ENCODE measurements at regions of chr9 and their contacts with region 1.

Region 1: DNA sequence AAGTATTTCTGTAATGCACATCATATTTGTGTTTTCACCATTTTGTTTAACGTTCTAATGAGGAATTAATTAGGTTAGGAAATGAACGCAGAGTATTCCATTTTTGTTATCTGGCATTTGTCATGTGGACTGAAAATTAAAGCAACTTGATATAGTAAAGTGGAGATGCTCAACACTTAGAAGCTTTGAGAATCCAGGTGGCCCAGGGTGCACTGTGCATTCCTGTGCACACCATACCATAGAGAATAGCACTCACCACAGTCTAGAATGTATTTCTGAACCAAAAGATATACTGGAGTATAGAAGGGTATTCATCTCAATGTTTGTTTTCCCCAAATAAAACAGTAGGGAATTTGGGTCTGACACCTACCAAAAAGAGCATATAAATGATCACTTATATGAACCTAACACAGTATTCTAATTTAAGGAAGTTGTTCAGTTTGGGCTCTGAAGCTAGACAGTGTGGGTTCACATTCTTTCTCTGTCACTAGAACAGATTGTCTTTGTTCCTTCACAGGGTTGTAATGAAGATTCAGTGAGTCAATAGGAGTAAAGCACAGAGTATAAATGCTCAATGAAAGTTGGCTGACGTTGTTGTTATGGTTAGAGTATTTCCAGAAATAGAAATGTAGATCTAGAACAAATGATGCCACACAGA is 125.6 kb upstream of the DMRT1 start:
- DNase-seq: no peak
- H3K4me3 ChIP-seq: no peak overlapping the region
- H3K4me3 Mint-ChIP-seq: no peak overlapping the region
- H3K27ac Mint-ChIP-seq: no peak overlapping the region
- H3K4me1 ChIP-seq: no peaks in the 10 kb centered on the region
- H3K4me1 Mint-ChIP-seq: no peaks in the 10 kb centered on the region
- H3K27me3 ChIP-seq: no peaks in the 10 kb centered on the region
- H3K27me3 Mint-ChIP-seq: no peaks in the 10 kb centered on the region
- CTCF ChIP-seq: no peak

Region 2: GRCh38 chr9:469672-470551 is 246.0 kb before region 1 on chr9:
- CTCF ChIA-PET with region 1: no interaction called
- POLR2A ChIA-PET with region 1: no interaction called
- intact Hi-C with region 1: no loop called
- DNase-seq: peak; percentile 85
- H3K4me3 ChIP-seq: peak overlapping the region; percentile 61
- H3K4me3 Mint-ChIP-seq: peak overlapping the region; percentile 94
- H3K27ac Mint-ChIP-seq: peak overlapping the region; percentile 95
- H3K4me1 ChIP-seq: peaks cover 28% of the 10 kb centered on the region
- H3K4me1 Mint-ChIP-seq: peaks cover 13% of the 10 kb centered on the region
- H3K27me3 ChIP-seq: no peaks in the 10 kb centered on the region
- H3K27me3 Mint-ChIP-seq: no peaks in the 10 kb centered on the region
- CTCF ChIP-seq: no peak

Region 3: GRCh38 chr9:607417-607816 is 108.5 kb before region 1 on chr9:
- CTCF ChIA-PET with region 1: no interaction called
- POLR2A ChIA-PET with region 1: interaction called, 12 read pairs
- intact Hi-C with region 1: no loop called
- DNase-seq: no peak
- H3K4me3 ChIP-seq: no peak overlapping the region
- H3K4me3 Mint-ChIP-seq: no peak overlapping the region
- H3K27ac Mint-ChIP-seq: no peak overlapping the region
- H3K4me1 ChIP-seq: peaks cover 24% of the 10 kb centered on the region
- H3K4me1 Mint-ChIP-seq: peaks cover 1% of the 10 kb centered on the region
- H3K27me3 ChIP-seq: no peaks in the 10 kb centered on the region
- H3K27me3 Mint-ChIP-seq: no peaks in the 10 kb centered on the region
- CTCF ChIP-seq: no peak

Region 4: GRCh38 chr9:738209-738915 is 22.5 kb after region 1 on chr9:
- CTCF ChIA-PET with region 1: no interaction called
- POLR2A ChIA-PET with region 1: no interaction called
- intact Hi-C with region 1: no loop called
- DNase-seq: peak in 1 of 2 experiments; percentile 32
- H3K4me3 ChIP-seq: no peak overlapping the region
- H3K4me3 Mint-ChIP-seq: no peak overlapping the region
- H3K27ac Mint-ChIP-seq: peak overlapping the region; percentile 35
- H3K4me1 ChIP-seq: peaks cover 11% of the 10 kb centered on the region; the same call in 1 of the 2 replicates
- H3K4me1 Mint-ChIP-seq: peaks cover 7% of the 10 kb centered on the region
- H3K27me3 ChIP-seq: no peaks in the 10 kb centered on the region
- H3K27me3 Mint-ChIP-seq: no peaks in the 10 kb centered on the region
- CTCF ChIP-seq: no peak

Region 5: DNA sequence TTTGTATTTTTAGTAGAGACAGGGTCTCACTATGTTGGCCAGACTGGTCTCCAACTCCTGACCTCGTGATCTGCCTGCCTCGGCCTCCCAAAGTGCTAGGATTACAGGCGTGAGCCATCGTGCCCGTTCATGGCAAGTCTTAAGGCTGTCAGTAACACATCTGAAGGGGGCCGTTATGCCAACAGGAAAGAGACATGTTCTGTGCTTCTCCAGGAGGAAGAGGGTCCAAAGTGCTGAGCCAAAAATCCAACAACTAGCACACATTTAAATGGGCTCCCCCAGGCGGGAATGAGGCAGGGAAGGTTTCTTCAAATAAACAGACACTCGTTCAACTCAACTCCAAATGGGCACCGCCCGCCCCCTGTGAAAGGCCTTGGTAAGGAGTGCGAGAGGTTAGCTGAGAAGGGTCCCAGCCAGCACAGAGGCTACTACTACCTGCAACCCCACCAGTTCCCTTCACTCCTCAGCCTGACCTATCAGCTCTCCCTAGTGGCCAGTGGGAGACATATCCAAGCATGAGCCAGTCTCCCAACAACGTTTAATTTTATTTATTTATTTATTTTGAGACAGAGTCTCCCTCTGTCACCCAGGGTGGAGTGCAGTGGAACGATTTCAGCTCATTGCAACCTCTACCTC is 41.5 kb after region 1 on chr9:
- CTCF ChIA-PET with region 1: no interaction called
- POLR2A ChIA-PET with region 1: no interaction called
- intact Hi-C with region 1: loop called (anchors 5 kb)
- DNase-seq: peak; percentile 54
- H3K4me3 ChIP-seq: no peak overlapping the region
- H3K4me3 Mint-ChIP-seq: no peak overlapping the region
- H3K27ac Mint-ChIP-seq: no peak overlapping the region
- H3K4me1 ChIP-seq: peaks cover 5% of the 10 kb centered on the region; the same call in 1 of the 2 replicates
- H3K4me1 Mint-ChIP-seq: peaks cover 9% of the 10 kb centered on the region
- H3K27me3 ChIP-seq: no peaks in the 10 kb centered on the region
- H3K27me3 Mint-ChIP-seq: no peaks in the 10 kb centered on the region
- CTCF ChIP-seq: peak; percentile 36 to 37

Region 6: DNA sequence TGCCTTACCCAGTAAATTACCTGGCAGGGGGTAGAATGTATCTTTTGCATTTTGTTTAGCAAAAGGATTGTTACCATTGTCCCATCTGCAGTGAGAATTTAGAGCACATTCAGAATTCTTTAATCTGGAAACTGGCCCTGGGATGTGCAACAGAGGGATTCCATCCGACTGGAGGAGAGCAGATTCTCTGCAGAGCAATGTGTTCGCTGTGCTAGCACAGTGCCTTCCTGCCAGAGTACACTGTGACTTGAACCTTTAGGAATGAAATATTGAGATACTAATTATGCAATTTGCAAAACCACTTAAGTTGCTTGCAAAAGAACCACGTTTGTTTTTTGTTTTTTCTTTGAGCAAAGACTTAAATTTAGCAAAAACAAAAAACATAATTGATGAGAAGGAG is 103.1 kb after region 1 on chr9:
- CTCF ChIA-PET with region 1: no interaction called
- POLR2A ChIA-PET with region 1: no interaction called
- intact Hi-C with region 1: no loop called
- DNase-seq: no peak
- H3K4me3 ChIP-seq: no peak overlapping the region
- H3K4me3 Mint-ChIP-seq: no peak overlapping the region
- H3K27ac Mint-ChIP-seq: no peak overlapping the region
- H3K4me1 ChIP-seq: no peaks in the 10 kb centered on the region
- H3K4me1 Mint-ChIP-seq: no peaks in the 10 kb centered on the region
- H3K27me3 ChIP-seq: no peaks in the 10 kb centered on the region
- H3K27me3 Mint-ChIP-seq: peaks cover 2% of the 10 kb centered on the region
- CTCF ChIP-seq: no peak